Posterior vena cava (tissue), 2 donors: ENCODE measurements at regions of chr3 and their contacts with region 1.

Region 1: GRCh38 chr3:192259661-192260060 is 467.7 kb downstream of the FGF12 start:
- DNase-seq: no peak

Region 2: DNA sequence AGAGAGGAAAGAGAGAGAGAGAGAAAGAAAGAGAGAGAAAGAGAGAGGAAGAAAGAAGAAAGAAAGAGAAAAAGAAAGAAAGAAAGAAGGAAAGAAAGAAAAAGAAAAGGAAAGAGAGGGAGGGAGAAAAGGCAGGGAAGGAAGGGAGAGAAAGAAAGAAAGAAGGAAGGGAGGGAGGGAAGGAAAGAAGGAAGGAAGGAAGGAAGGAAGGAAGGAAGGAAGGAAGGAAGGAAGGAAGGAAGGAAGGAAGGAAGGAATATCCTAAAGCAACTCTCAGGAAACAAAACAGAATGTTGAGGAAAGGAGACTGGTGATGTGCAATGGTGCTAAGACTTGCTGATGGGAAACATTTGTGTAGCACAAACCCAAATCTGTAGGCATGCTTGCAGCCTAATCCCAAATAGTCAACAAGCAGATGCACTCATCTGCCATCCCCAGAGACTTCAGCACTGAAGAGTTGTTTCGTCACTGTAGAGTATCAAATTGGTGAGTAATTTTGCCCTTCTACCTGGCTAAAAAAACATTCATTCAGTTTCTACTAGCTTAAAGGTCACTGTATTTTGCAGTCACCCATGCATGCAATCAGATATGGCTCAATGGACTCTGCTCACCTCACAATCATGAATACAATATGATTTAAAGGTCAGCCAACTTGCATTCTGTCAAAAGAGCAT is 12.7 kb before region 1 on chr3:
- intact Hi-C with region 1: loop called in 1 of 2 experiments (anchors 1 kb)
- DNase-seq: no peak

Region 3: DNA sequence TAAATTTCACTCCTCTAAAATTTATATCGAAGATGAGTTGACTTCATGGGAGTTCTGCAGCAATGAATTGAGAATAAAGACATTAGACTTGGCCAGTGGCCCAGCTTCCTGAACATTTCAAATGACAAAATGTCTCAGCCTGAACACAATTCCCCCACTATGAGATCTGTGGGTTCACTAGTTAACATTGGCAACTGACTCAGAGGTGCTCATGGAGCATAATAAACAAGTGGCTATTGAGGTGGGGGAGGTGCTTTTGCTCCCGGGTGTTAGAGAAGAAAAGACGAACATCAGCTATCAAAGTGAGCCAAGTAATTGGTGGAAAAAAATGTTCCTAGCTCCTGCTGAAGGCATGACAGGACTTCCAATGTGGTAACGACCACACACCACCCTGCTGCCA is 1288.7 kb after region 1 on chr3:
- intact Hi-C with region 1: loop called in 1 of 2 experiments (anchors 10 kb)
- DNase-seq: no peak